Common myeloid progenitor, CD34-positive (primary cell): ENCODE measurements at regions of chr9 and their contacts with region 1.

Region 1: GRCh38 chr9:123349691-123350480 is 6.1 kb upstream of the CRB2 start:
- DNase-seq: peak; percentile 61 to 79 (median 73)
- H3K4me3 ChIP-seq: peak overlapping the region in 2 of 7 experiments; percentile 8 to 45
- H3K27ac ChIP-seq: no peak overlapping the region
- H3K4me1 ChIP-seq: peaks cover 0 to 15% (median 11%) of the 10 kb centered on the region in 4 experiments
- H3K27me3 ChIP-seq: peaks cover 0 to 2% (median 0%) of the 10 kb centered on the region in 5 experiments

Region 2: GRCh38 chr9:123073991-123074422 is 275.9 kb before region 1 on chr9:
- CTCF ChIA-PET with region 1: interaction called, 41 read pairs
- POLR2A ChIA-PET with region 1: no interaction called
- DNase-seq: no peak
- H3K4me3 ChIP-seq: no peak overlapping the region
- H3K27ac ChIP-seq: peak overlapping the region; percentile 11 to 44
- H3K4me1 ChIP-seq: peaks cover 6 to 39% (median 10%) of the 10 kb centered on the region in 4 experiments
- H3K27me3 ChIP-seq: no peaks in the 10 kb centered on the region

Region 3: GRCh38 chr9:123091459-123091858 is 258.4 kb before region 1 on chr9:
- CTCF ChIA-PET with region 1: interaction called, 31 read pairs
- POLR2A ChIA-PET with region 1: no interaction called
- DNase-seq: peak in 1 of 3 donors; percentile 29
- H3K4me3 ChIP-seq: no peak overlapping the region
- H3K27ac ChIP-seq: no peak overlapping the region
- H3K4me1 ChIP-seq: no peaks in the 10 kb centered on the region
- H3K27me3 ChIP-seq: no peaks in the 10 kb centered on the region

Region 4: GRCh38 chr9:123112015-123112975 is 237.6 kb before region 1 on chr9:
- CTCF ChIA-PET with region 1: interaction called, 23 read pairs
- POLR2A ChIA-PET with region 1: no interaction called
- DNase-seq: peak; percentile 14 to 68 (median 53)
- H3K4me3 ChIP-seq: peak overlapping the region in 3 of 7 experiments; percentile 1 to 47 (median 42)
- H3K27ac ChIP-seq: peak overlapping the region in 1 of 2 experiments; percentile 63
- H3K4me1 ChIP-seq: peaks cover 0 to 26% (median 11%) of the 10 kb centered on the region in 4 experiments
- H3K27me3 ChIP-seq: no peaks in the 10 kb centered on the region

Region 5: DNA sequence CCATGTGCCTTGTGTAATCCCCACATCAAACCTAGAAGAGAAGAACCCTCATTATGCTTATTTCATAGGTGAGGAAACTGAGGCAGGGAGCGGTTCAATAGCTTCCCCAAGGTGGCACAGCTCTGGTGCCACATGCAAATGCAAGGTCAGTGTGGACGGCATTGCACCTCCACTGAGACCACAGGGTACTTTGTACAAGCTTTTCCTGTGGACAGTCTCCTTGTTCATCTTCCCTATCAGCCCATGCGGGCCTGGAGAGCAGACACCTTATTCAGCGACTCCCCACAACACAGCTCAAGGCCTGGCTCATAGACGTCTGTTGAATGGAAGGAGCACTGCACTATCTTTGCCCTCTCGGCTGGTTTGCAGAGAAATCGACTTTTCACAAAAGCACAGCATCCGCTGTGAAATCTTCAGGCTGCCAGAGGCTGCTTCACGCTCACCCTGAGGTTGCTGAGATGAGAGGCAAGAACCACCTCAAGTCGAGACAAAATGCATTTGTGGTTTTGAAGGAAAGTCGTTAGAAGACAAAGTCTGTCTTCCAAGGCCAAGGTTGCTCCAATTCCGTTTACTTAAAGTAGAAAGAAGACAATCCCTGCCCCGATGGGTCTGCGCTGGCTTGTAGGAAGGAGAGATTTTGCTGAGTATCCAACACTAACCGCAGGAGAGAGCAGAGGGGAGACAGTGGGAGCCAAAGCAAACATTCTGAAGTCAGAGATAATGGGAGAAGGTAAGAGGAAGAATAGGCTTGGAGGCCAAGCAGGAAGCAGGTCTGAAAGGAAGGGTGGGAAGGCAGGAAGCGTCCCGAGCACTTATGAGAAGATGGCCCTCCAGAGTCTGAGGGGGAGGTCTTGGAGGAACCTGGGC is 47.3 kb before region 1 on chr9:
- CTCF ChIA-PET with region 1: no interaction called
- POLR2A ChIA-PET with region 1: no interaction called
- DNase-seq: no peak
- H3K4me3 ChIP-seq: no peak overlapping the region
- H3K27ac ChIP-seq: peak overlapping the region in 1 of 2 experiments; percentile 35
- H3K4me1 ChIP-seq: peaks cover 0 to 19% (median 2%) of the 10 kb centered on the region in 4 experiments
- H3K27me3 ChIP-seq: no peaks in the 10 kb centered on the region

Region 6: GRCh38 chr9:123338710-123339665 is 10.9 kb before region 1 on chr9:
- CTCF ChIA-PET with region 1: interaction called, 13 read pairs
- POLR2A ChIA-PET with region 1: no interaction called
- DNase-seq: peak; percentile 54 to 90 (median 86)
- H3K4me3 ChIP-seq: peak overlapping the region in 6 of 7 experiments; percentile 21 to 67 (median 48)
- H3K27ac ChIP-seq: peak overlapping the region; percentile 67 to 89
- H3K4me1 ChIP-seq: peaks cover 8 to 71% (median 48%) of the 10 kb centered on the region in 4 experiments
- H3K27me3 ChIP-seq: no peaks in the 10 kb centered on the region

Region 7: DNA sequence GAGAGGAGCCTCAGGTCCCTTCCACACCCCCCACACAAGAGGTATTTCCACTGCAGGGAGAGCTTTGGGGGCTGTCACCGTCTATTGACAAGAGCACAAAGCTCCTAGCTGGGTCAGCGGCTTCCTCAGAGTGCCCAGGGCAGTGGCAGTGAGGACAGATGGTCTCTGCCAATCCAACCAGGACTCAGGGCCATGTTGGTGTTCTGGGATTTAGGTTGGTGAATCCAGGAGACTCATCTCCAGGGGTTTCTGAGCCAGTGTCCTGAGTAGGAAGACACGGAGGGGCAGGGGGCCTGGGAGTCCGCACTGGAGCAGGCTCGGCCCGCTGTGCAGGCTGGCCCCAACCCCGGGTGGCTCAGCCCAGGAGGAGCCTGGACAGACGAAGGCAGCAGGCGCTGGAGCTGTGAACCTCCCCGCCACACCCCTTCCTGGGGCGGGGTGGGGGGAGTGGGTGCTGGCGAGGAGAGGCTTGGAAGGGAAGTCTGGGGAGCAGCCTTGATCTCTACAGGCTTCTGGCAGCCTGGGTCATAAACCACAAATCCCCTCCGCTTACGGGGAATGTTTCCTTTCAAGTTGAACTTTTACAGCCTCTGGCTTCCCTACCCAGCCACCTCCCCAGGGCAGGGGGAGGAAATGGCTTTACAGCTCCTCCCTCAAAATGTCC is 25.7 kb after region 1 on chr9:
- CTCF ChIA-PET with region 1: interaction called, 10 read pairs
- POLR2A ChIA-PET with region 1: no interaction called
- DNase-seq: peak; percentile 28 to 66 (median 55)
- H3K4me3 ChIP-seq: peak overlapping the region in 3 of 7 experiments; percentile 19 to 44 (median 30)
- H3K27ac ChIP-seq: no peak overlapping the region
- H3K4me1 ChIP-seq: peaks cover 0 to 46% (median 42%) of the 10 kb centered on the region in 4 experiments
- H3K27me3 ChIP-seq: peaks cover 0 to 43% (median 19%) of the 10 kb centered on the region in 5 experiments

Region 8: DNA sequence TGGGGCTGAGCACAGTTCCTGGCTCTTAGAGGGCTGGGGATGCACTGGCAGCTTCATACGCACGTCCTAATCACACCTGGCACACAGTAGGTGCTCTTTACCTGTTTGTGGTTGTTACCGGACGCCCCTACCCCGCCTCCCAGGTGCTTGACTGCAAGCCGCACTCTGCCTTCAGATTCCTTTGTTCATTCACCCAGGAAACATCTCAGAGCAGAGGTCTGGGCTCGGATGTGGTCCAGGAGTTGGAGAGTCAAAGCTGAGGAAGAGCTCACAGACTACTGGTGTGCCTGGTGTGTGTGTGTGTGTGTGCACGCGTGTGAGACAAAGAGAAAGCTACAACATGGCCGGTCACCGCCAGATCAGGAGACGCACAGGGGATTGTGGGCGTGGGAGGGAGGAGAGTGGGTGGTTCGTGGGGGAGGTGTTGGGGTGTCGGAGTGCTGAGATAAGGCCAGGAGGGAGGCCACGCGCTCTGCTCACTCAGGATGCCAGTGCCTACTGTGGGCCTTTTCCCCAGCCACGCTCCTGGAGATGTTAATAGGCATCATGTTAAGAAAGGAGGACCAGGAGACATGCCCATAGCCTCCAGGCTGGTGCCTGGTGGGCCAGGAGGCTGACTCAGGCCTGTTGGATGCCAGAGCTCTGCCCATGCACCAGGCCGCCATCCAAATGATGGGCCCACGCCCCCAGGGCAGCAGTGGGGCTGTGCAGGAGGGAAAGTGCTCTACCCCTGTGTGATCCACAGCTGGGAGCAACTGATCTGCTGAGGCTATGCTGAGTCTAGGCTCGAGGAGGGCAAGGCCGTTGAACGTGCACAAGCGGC is 46.0 kb after region 1 on chr9:
- CTCF ChIA-PET with region 1: interaction called, 225 read pairs
- POLR2A ChIA-PET with region 1: no interaction called
- DNase-seq: no peak
- H3K4me3 ChIP-seq: no peak overlapping the region
- H3K27ac ChIP-seq: no peak overlapping the region
- H3K4me1 ChIP-seq: no peaks in the 10 kb centered on the region
- H3K27me3 ChIP-seq: no peaks in the 10 kb centered on the region

Region 9: DNA sequence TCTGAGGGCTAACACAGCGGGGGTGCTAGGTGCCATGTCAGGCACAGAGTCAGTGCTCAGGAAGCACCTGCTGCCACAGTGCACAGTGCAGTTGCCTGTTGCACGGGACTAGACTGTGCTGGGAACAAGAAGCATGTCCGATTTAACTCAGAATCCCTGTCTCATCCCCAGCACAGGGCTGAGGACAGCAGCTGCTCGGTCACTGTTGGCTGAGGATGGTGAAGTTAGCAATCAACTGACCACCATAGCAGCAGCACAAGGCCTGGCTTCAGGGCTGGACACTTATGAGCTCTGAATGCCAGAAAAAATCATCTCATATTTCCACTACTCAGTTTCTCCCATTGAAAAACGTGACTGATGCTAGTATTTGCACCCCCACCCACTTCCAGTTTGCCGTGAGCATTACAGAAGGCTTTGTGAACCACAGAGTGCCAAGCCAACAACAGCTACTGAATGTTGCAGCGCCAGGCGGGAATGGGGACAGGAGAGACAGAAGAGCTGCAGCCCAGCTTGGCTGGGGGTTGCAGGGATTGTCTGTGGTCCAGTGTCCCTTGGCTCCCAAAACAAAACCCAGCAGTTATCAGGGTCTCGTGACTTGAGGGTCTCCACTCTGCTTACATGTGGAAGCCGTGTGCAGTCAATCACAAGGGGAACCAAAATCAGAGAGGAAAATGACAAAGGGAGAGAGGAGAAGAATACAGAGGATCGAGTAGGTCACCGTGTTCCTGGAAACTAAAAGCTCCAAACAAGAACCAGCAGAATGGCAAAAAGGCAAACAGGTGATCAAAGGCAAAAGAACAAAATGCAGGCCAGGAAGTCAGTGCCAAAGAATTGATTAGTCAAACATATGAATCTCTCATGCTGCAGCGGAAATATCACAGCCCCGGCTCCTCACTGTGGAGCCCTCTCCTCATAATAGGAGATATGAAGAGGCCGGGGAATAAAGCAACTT is 161.7 kb after region 1 on chr9:
- CTCF ChIA-PET with region 1: no interaction called
- POLR2A ChIA-PET with region 1: no interaction called
- DNase-seq: no peak
- H3K4me3 ChIP-seq: no peak overlapping the region
- H3K27ac ChIP-seq: no peak overlapping the region
- H3K4me1 ChIP-seq: no peaks in the 10 kb centered on the region
- H3K27me3 ChIP-seq: no peaks in the 10 kb centered on the region

Region 10: DNA sequence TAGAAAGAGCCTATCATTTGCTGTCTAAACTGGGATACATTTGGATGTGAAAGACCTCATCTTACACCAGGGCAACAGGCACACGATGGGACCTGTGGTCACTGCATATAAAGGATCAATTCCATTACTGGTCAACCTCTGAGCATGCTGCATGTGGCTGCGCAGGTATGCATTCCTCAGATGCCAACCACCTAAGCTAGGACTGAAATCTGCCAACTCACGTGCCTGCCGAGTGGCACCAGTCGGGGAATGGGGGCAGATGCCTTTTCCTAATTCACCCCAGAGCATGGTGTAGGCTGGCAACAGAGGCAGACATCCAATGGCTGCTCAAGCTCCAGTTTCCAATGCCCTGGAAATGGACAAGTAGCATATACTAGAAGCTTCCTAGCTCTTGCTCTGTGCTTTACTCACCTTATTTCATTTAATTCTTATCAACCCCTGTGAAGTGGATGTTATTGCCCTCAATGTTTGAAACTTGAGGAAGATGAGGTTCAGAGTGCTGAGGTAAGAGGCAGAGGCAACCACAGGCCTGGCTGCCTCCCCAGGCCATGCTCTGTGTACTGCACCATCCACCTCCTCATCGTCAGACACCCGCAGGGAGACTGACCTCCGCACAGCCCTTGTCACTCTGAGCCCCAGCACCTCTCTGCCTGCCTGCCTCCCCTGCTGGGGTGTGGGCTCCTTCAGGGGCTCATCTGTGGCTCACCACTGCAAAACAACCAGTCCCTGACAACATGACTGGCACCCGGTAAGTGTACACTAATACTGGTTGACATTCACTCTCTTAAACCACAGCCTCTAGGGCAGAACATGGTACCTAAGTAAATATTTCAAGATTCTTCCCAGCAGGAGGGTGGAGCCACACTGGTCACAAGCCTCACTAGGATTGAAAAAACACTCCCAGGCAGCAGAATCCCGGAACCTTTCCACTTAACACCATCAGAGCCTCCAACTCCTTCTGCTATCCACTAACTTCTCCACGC is 234.6 kb after region 1 on chr9:
- CTCF ChIA-PET with region 1: no interaction called
- POLR2A ChIA-PET with region 1: no interaction called
- DNase-seq: no peak
- H3K4me3 ChIP-seq: no peak overlapping the region
- H3K27ac ChIP-seq: no peak overlapping the region
- H3K4me1 ChIP-seq: no peaks in the 10 kb centered on the region
- H3K27me3 ChIP-seq: no peaks in the 10 kb centered on the region

Region 11: GRCh38 chr9:123599781-123600180 is 249.9 kb after region 1 on chr9:
- CTCF ChIA-PET with region 1: no interaction called
- POLR2A ChIA-PET with region 1: no interaction called
- DNase-seq: no peak
- H3K4me3 ChIP-seq: no peak overlapping the region
- H3K27ac ChIP-seq: no peak overlapping the region
- H3K4me1 ChIP-seq: no peaks in the 10 kb centered on the region
- H3K27me3 ChIP-seq: no peaks in the 10 kb centered on the region